ENCODE measurements at regions of chr17 and their contacts with region 1.

Region 1: GRCh38 chr17:32783602-32784001 is 93.3 kb downstream of the MYO1D start:
- DNase-seq: peak; percentile 61
- CTCF ChIP-seq: peak; percentile 54

Region 2: GRCh38 chr17:32341857-32342602 is 441.6 kb before region 1 on chr17 and contains the start of gene C17orf75:
- CTCF ChIA-PET with region 1: no interaction called
- POLR2A ChIA-PET with region 1: no interaction called
- DNase-seq: peak; percentile 82
- CTCF ChIP-seq: no peak

Region 3: GRCh38 chr17:32794533-32795246 is 11.1 kb after region 1 on chr17:
- CTCF ChIA-PET with region 1: interaction called, 42 read pairs
- POLR2A ChIA-PET with region 1: no interaction called
- DNase-seq: no peak
- CTCF ChIP-seq: no peak

Region 4: DNA sequence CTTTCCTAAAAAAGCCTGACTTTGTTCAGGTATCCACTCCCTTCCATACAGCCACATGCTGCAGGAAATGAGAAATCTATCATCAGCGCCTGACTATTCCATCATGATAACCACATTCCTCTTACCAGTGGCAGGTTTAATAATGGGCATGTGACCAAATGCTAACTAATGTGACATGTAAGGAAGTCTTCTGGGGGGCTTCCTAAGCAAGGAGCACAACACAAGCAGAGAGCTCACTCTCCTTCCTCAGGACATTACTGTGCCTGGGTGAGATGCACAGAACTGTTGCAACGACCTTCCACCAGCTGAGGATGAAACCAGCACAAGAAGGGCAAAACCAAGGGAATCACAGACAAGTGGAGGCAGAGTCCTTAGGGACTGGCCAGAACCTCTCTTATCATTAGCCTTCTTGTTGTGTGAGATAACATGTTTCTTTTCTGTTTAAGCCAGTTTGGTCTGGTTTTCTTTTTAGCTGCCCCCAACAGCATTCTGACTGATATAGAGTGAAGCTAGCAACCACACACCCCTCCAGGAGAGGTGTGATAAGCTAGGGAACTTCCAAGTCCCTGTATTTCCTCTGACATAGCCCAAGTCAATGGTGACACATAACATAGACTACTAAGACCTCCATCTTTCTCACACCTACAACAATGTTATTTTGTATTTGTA is 76.4 kb after region 1 on chr17:
- CTCF ChIA-PET with region 1: interaction called, 16 read pairs
- POLR2A ChIA-PET with region 1: no interaction called
- DNase-seq: peak; percentile 33
- CTCF ChIP-seq: no peak

Region 5: GRCh38 chr17:32909787-32910369 is 126.3 kb after region 1 on chr17:
- CTCF ChIA-PET with region 1: interaction called, 66 read pairs
- POLR2A ChIA-PET with region 1: no interaction called
- DNase-seq: peak; percentile 79
- CTCF ChIP-seq: peak; percentile 75

Region 6: DNA sequence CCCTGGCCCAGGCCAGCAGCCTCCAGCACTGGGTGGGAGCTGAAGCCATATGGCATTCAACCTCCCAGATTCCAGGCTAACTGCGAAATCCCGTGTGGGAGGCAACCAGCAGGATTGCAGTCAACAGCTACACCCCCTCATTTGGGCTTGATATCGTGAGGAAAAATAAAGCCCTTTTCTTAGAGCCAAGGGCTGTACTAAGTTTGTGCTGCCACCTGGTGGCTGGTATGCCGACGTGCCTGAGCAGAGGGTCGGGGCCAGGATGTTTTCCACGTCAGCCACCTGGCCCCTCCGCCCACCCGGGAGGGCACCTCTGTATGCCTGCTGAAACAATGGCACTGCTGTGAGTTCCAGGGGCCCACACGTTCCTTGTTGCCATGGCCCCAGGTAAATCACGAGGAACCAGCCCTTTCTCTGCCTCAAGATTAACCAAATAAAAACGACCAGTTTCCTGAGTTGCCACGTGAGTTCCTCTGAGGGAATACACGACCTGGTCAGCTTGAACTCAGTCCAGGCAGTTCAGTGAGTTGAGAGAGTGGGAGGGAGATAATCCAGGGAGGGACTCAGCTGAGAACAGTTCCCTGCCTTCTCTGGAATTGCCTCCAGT is 153.4 kb after region 1 on chr17:
- CTCF ChIA-PET with region 1: interaction called, 23 read pairs
- POLR2A ChIA-PET with region 1: no interaction called
- DNase-seq: peak; percentile 82
- CTCF ChIP-seq: peak; percentile 88

Measured in GM10248 (cell line).